ENCODE measurements at regions of chr12 and their contacts with region 1.

Region 1: DNA sequence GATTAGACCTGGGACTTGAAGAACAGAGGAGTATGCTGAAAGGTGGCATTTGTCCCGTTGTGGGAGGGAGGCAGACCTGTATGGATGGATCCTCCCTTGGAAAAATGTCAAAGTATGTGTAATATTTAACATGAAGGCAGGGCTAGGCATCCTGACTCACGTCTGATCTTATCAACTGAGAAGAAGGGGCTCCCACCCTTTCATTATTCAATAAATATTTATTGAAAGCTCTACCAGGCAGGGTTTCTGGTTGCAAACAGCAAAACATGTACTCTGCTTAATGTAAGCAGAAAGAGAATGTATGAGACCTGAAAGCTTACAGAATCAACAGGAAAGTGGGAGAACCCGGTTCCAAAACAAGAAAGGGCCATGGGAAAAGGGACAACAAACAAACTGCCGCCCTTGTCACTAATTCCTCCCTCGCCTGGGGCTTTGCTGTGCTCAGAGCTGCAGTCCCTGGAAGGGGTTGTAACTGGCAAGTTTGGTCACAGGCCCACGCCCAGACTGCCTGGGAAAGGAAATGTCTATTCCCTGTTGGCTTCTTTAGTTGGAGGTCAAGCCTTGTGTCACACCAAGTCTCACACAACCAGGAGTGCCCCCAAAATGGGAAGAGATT is 37.0 kb downstream of the RAB35 start:
- DNase-seq: no peak
- ATAC-seq: no peak

Region 2: DNA sequence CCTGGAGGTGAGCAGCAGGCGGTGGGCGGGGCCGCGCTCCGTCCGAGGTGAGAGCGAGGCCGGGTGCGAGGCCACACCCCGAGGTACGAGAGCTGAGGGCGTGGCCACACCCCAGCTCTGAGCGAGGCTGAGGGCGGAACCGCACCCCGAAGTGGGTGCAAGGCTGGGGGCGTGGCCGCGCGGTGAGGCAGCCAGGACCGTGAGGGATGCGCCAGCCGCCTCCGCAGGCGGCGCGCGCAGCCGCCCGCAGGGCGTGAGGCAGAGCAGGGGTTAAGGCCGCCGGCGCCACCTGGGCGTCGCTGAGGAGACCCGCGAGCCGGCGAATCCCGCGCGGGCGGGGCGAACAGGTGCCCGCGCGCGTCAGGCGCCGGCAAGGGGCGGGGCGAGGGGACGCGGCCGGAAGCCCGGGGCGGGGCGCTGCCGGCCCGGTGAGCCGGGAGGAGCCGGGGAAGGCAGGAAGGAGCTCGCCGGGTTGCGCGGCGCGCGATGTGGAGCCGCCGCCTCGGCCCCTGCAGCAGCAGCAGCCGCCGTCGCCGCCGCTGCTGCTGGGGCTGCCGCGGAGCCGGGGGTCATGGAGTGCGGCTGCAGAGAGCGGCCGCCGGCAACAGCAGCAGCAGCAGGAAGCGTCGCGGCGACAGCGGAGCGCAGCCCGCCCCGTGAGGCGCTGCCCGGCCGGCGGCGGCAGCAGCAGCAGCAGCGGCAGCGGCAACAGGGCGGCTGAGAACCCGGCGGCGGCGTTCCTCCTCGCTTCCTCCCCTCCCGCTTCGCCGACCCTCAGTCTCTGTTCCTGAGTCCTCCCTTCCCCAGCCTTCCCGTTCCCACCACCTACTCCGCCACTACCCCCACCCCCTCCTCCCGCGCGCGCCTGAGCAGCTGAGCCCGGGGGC is 90.5 kb before region 1 on chr12 and contains the start of gene BICDL1:
- intact Hi-C with region 1: loop called (anchors 10 kb)
- DNase-seq: peak; percentile 90
- ATAC-seq: peak; percentile 47
- total RNA-seq, gene BICDL1: 0.87 TPM

Region 3: DNA sequence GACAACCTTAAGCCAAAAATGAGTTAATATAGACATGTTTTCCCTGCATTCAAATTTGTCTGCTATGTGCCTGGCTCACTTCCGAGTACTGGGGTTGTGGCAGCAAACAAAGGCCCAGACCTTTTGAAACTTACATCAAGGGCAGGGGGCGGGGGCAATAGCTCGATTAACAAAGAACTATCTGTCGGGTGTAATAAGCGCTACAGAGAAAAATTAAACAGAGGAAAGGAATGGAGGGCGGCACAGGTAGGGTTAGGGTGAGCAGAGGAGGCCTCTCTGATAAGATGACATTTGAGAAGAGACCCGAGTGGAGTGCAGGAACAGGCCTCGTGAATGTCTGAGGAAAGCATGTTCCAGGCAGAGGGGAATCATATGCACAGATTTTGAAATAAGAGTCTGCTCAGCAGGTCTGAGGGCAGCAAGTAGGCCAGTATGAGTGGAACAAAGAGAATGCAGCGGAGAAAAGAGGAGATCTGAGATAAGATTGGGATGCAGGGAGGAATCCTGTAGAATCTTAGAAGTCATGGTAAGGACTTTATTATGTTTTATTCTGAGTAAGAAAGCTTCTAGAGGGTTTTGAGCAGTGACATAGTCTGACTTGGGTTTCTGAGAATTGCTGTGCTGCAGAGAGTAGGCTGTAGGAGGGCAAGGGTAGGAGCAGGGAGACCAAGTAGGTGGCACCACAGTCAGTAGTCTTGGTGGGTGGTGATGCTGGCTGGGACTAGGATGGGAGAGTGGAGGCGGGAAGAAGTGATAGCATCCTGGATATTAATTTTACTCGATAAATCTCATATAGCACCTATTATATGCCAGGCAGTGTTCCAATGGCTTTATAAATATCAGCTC is 37.9 kb before region 1 on chr12:
- intact Hi-C with region 1: no loop called
- DNase-seq: no peak
- ATAC-seq: no peak